Endothelial cell of umbilical vein (primary cell): ENCODE measurements at regions of chr1 and their contacts with region 1.

Region 1: DNA sequence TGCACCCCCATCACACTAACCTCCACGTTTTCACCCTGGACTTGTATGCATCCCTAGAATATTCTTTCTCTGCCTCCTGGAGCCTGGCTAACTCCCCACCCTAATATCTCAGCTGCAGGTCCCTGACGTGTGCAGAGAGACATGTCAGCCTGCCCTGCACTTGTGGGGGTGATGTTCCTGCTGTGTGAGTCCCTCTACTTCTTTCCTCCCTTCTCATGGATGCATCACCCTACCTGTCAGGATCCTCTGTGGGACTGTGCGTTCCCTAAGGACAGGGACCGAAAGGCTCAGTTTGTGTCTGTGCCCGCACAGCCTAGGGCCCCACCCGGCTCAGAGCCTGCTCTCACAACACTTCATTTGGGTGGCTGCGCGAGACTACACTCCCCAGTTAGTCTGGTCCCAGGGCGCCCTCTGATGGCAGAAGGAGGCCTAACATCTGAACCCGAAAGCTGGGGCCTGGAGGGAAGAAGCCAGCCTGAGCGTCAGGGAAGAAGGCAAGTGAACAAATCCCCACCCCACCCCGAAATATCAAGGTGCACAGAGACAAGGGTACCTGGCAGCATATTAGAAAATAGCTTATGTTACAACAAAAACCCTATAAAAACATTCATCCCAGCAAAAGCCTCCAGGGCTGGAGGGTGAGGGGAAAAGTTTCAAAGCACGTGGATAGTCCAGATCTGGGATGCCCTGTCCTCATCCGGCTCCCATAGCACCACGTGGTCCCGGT is 3.7 kb downstream of the CD52 start:
- DNase-seq: peak; percentile 81
- H3K4me3 ChIP-seq: no peak overlapping the region
- H3K27ac ChIP-seq: no peak overlapping the region
- H3K4me1 ChIP-seq: no peaks in the 10 kb centered on the region
- H3K27me3 ChIP-seq: no peaks in the 10 kb centered on the region
- CTCF ChIP-seq: peak; percentile 82 to 92
- POLR2A ChIP-seq: no peak

Region 2: DNA sequence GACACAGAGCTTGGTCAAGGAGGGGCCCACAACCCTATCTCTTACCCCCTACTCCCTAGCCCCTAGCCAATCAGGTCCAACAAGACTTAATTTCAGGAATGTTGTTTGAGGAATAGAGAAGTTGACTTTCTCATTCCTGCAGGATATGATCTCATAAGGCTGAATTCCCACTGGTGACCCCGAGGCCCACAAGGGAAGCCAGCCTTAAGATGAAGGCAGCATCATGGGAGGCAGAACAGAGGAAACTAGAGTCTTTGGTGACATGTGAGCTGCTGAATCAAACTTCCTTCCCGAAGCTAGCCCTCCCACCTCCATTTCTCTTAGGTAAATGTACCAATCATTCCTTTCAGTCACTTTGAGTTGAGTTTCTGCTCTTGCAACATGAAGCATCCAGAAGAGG is 219.0 kb before region 1 on chr1:
- CTCF ChIA-PET with region 1: interaction called, 13 read pairs
- POLR2A ChIA-PET with region 1: no interaction called
- dilution Hi-C with region 1: no loop called
- intact Hi-C with region 1: loop called (anchors 1 kb)
- DNase-seq: peak; percentile 68
- H3K4me3 ChIP-seq: no peak overlapping the region
- H3K27ac ChIP-seq: peak overlapping the region; percentile 62
- H3K4me1 ChIP-seq: peaks cover 30% of the 10 kb centered on the region
- H3K27me3 ChIP-seq: no peaks in the 10 kb centered on the region
- CTCF ChIP-seq: no peak
- POLR2A ChIP-seq: no peak

Region 3: GRCh38 chr1:26145041-26145959 is 176.2 kb before region 1 on chr1:
- CTCF ChIA-PET with region 1: interaction called, 21 read pairs
- POLR2A ChIA-PET with region 1: no interaction called
- dilution Hi-C with region 1: no loop called
- intact Hi-C with region 1: loop called (anchors 1 kb)
- DNase-seq: peak; percentile 76
- H3K4me3 ChIP-seq: no peak overlapping the region
- H3K27ac ChIP-seq: no peak overlapping the region
- H3K4me1 ChIP-seq: no peaks in the 10 kb centered on the region
- H3K27me3 ChIP-seq: no peaks in the 10 kb centered on the region
- CTCF ChIP-seq: peak; percentile 66 to 83
- POLR2A ChIP-seq: no peak

Region 4: GRCh38 chr1:26190373-26190987 is 131.0 kb before region 1 on chr1 and contains the start of gene CATSPER4:
- CTCF ChIA-PET with region 1: interaction called, 12 read pairs
- POLR2A ChIA-PET with region 1: no interaction called
- dilution Hi-C with region 1: no loop called
- intact Hi-C with region 1: no loop called
- DNase-seq: no peak
- H3K4me3 ChIP-seq: no peak within 1 kb of the TSS
- H3K27ac ChIP-seq: no peak within 1 kb of the TSS
- H3K4me1 ChIP-seq: no peaks in the 10 kb centered on the region
- H3K27me3 ChIP-seq: peaks cover 0 to 5% of the 10 kb centered on the region in 2 experiments
- CTCF ChIP-seq: peak in 1 of 2 donors; percentile 12
- POLR2A ChIP-seq: no peak
- total RNA-seq, gene CATSPER4: not detected in 2 replicates

Region 5: GRCh38 chr1:26259578-26259977 is 61.9 kb before region 1 on chr1:
- CTCF ChIA-PET with region 1: no interaction called
- POLR2A ChIA-PET with region 1: no interaction called
- dilution Hi-C with region 1: no loop called
- intact Hi-C with region 1: no loop called
- DNase-seq: no peak
- H3K4me3 ChIP-seq: no peak overlapping the region
- H3K27ac ChIP-seq: no peak overlapping the region
- H3K4me1 ChIP-seq: no peaks in the 10 kb centered on the region
- H3K27me3 ChIP-seq: no peaks in the 10 kb centered on the region
- CTCF ChIP-seq: no peak
- POLR2A ChIP-seq: no peak

Region 6: DNA sequence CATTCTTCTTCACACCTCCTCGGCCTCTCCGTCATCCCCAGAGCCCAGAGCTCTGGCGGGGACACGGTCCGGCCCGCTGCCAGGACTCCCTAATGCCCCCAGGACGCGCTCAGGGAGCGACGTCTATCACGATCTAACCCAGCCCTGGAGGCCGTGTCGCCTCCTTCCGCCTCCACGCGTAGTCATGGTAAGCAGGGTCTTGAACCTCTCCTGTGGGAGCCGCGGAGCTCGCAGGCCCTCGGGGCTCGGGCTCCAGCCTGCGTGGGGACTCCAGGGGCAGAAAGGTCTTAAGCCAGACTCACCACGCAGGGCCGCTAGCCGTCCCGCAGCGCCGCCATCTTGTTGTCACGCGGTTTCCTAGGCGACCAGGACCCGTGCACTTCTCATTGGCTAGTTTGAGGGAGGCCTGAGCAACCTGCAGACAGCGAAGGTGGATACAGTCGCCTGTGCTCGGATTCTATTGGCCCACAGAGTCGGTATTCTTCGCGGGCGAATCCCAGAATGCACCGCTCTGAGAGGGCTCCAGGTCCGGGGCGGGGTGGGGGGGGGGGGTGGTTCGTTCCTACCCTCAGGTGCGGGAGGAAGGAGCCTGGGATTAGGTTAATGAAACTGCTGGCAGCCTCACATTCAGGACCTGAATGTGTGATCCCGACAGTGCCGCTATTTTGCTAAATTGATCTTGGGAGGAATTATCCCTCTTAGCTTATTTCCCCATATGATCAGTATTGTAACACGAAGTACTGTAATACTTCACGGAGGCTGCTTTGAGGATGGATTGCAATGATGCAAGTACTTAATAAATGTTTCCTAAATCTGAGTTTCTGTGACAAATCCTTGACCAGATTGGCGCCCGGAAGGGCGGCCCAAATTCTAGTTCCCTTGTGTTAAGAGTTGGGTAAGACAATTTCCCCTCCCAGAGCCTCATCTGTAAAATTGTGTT is 14.9 kb before region 1 on chr1 and contains the start of gene UBXN11:
- CTCF ChIA-PET with region 1: interaction called, 17 read pairs
- POLR2A ChIA-PET with region 1: no interaction called
- dilution Hi-C with region 1: no loop called
- intact Hi-C with region 1: no loop called
- DNase-seq: peak; percentile 95
- H3K4me3 ChIP-seq: peak within 1 kb of the TSS; percentile 11 to 81 (median 62)
- H3K27ac ChIP-seq: peak within 1 kb of the TSS; percentile 9
- H3K4me1 ChIP-seq: peaks cover 10% of the 10 kb centered on the region
- H3K27me3 ChIP-seq: no peaks in the 10 kb centered on the region
- CTCF ChIP-seq: no peak
- POLR2A ChIP-seq: no peak
- total RNA-seq, gene UBXN11: 11.9 and 15.6 TPM in 2 replicates

Region 7: DNA sequence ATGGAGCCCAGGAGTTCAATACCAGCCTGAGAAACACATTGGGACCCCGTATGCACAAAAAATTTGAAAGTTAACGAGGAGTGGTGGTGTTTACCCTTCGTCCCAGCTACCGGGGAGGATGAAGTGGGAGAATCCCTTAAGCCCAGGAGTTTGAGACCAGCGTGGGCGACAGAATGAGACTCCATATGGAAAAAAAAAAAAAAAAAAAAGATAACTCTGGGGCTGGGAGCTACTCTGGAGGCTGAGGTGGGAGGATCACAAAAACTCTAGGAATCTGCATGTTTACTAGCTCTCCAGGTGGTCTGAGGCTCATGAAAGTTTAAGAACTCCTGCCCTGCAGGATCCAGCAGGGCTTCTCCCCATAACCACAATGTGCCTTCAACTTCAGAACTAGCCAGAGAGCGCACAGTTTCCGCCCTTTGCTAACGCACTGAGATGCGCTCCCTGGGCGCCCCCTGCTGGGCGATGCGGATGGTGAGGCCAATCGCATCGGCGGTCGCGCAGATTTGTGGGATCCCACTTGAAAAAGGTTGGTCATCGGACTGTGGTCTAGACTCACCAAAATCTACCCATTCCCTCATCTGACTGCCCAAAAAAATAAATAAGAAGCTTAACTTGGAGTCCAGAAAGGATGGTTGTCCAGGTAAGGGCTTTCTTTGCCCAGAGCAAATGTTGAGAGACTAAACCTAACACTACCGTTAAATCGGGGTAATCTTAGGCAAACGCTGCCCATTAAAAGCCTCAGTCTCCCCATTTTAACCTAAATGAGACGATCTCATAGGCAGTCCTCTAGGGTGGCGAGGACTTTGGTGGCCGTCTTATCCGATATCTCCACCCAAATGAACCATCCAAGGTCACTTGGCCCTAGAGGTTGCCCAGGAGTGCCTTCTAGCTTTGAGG is 42.3 kb after region 1 on chr1:
- CTCF ChIA-PET with region 1: interaction called, 25 read pairs
- POLR2A ChIA-PET with region 1: interaction called, 4 read pairs
- dilution Hi-C with region 1: no loop called
- intact Hi-C with region 1: loop called (anchors 5 kb)
- DNase-seq: peak; percentile 67
- H3K4me3 ChIP-seq: no peak overlapping the region
- H3K27ac ChIP-seq: no peak overlapping the region
- H3K4me1 ChIP-seq: no peaks in the 10 kb centered on the region
- H3K27me3 ChIP-seq: peaks cover 18 to 23% of the 10 kb centered on the region in 2 experiments
- CTCF ChIP-seq: peak; percentile 96 to 99
- POLR2A ChIP-seq: no peak